Left cardiac atrium (tissue), 4 donors: ENCODE measurements at regions of chr18 and their contacts with region 1.

Region 1: DNA sequence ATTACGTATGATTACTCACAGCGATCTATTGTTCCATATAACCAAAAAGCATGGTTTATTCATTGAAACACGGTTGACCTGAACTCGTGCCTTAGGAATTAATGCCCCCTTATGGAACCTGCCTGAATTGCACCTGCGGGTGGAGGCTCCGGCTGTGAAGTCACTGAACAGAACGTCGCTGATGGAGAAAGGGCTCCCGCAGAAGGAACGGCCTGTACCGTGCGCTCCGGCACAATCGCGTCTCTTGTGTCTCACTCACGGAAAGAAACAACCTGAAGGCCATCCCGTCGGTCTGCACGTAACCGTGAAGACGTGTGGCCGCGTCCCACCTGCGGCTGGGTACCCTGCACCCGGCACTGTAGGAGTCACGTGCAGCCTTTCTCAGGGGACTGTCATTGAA is 133.1 kb downstream of the NFATC1 start:
- DNase-seq: no peak
- ATAC-seq: peak; percentile 26 to 33

Region 2: DNA sequence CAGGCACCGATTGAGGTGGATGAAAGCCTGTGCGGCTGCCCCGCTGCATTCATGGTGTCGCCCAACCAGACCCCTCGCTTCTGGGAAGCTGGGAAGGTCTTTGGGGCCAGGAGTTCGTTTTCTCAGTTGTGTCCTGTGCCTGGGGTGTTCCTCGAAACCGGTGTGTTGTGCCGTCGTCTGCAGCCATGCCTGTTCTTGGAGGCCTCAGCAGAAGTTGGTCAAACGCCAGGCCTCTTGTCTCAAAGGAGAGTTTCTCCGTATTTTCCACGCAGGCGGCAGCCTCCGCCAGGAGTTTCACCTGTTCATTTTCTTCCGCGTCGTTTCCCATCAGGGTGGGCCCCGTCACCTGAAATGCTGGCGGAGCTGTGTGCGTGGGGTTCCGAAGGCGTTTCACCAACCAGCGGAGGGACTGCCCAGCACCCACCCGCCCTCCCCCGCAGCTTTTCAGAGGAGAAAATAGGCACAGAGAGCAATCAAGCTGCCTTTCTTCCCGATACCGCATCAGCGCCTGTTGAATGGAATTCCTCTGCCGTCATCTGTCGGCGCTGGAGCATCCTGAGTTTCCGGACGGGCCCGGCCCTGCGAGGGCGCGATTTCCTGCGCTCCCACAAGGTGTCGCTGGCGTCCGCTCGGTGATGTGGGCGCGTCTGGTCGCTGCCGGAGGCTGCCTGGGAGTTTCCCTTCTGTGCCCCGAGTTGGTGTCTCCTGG is 150.2 kb before region 1 on chr18:
- intact Hi-C with region 1: loop called (anchors 2 to 5 kb)
- DNase-seq: peak; percentile 85
- ATAC-seq: peak; percentile 81 to 82

Region 3: GRCh38 chr18:79393635-79394533 is 135.0 kb before region 1 on chr18:
- intact Hi-C with region 1: loop called in 1 of 2 experiments (anchors 5 kb)
- DNase-seq: peak; percentile 97
- ATAC-seq: peak; percentile 78 to 82

Region 4: DNA sequence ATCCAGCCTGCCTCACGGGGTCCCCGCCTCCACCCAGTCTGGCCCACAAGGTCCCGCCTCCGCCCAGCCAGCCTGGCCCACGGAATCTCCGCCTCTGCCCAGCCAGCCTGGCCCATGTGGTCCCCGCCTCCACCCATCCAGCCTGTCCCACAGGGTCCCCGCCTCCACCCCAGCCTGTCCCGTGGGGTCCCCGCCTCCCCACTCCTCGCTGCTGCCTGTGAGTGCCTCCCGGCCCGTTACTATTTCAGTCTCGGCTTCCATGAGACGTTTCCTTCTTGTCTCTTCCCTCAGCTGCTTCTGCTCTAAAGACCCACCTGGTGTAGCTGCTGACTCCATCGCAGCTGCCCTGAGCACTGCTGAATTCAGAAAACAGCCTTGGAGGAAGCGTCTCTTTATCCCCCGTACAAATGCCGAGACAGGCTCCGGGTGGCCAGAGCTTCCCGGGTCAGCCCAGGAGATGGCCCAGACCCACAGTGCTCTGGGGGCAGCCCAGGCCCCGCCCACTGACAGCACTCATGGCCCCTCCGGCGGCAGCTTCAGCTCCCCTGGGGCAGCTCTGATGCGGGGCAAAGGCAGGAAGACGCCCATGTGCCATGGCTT is 63.4 kb before region 1 on chr18:
- intact Hi-C with region 1: loop called in 1 of 2 experiments (anchors 10 kb)
- DNase-seq: peak; percentile 44
- ATAC-seq: peak; percentile 50 to 88

Region 5: GRCh38 chr18:79575891-79576685 is 47.2 kb after region 1 on chr18:
- intact Hi-C with region 1: no loop called
- DNase-seq: peak; percentile 53
- ATAC-seq: peak; percentile 35 to 73

Region 6: GRCh38 chr18:79599441-79599931 is 70.6 kb after region 1 on chr18:
- intact Hi-C with region 1: loop called in 1 of 2 experiments (anchors 10 kb)
- DNase-seq: peak; percentile 17
- ATAC-seq: no peak

Region 7: GRCh38 chr18:79644006-79644665 is 115.3 kb after region 1 on chr18:
- intact Hi-C with region 1: loop called (anchors 2 to 5 kb)
- DNase-seq: peak; percentile 71
- ATAC-seq: peak; percentile 82 to 87